WTC11 (cell line): ENCODE measurements at regions of chr15 and their contacts with region 1.

Region 1: DNA sequence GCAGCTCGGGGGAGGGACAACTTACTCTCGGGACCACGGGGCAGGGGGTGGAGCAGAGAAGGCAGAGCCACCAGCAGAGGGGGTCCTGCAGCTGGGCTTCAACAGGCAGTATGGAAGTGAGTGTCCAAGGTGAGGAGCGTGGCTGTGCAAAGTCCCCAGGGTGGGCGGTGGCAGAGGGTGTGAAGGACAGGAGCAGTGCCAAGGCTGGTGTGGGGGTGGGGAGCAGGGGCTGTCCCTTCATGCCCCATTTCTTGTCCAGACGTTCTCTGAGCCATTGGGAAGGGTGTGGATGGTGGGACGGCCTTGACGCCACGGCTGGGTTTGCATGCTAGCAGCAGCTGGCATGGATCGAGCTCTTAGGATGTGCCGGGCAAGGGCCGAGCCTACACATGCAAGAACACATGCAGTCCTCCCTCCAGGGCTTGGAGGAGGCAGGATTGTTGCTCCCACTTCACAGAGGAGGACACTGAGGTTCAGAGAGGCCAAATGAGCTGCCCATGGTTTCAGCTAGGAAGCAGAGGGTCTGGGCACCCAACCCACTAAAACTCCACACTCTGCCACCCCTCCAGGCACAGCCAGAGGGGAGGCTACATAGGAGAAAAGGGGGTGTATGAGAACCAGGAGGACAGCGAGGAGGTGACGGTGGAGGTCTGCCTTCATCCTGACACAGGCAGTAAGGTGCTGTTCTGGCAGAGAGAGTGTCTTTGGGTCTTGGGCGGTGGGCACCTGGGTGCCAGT is 93.6 kb downstream of the TBC1D2B start:
- DNase-seq: no peak
- ATAC-seq: peak; percentile 56
- H3K4me3 Mint-ChIP-seq: no peak overlapping the region
- H3K27ac Mint-ChIP-seq: no peak overlapping the region
- H3K4me1 Mint-ChIP-seq: peaks cover 14% of the 10 kb centered on the region
- H3K27me3 Mint-ChIP-seq: no peaks in the 10 kb centered on the region
- CTCF ChIP-seq: no peak

Region 2: GRCh38 chr15:77907824-77908751 is 75.8 kb before region 1 on chr15:
- CTCF ChIA-PET with region 1: interaction called, 14 read pairs
- POLR2A ChIA-PET with region 1: no interaction called
- DNase-seq: peak; percentile 85
- ATAC-seq: peak; percentile 88
- H3K4me3 Mint-ChIP-seq: no peak overlapping the region
- H3K27ac Mint-ChIP-seq: no peak overlapping the region
- H3K4me1 Mint-ChIP-seq: peaks cover 17% of the 10 kb centered on the region
- H3K27me3 Mint-ChIP-seq: peaks cover 3% of the 10 kb centered on the region; the same call in 1 of the 2 replicates
- CTCF ChIP-seq: 0 out of 2 replicates have a peak, but pooled peaks have one; percentile 36

Region 3: GRCh38 chr15:77966540-77967290 is 17.2 kb before region 1 on chr15:
- CTCF ChIA-PET with region 1: interaction called, 11 read pairs
- POLR2A ChIA-PET with region 1: no interaction called
- DNase-seq: peak; percentile 64
- ATAC-seq: peak; percentile 89
- H3K4me3 Mint-ChIP-seq: no peak overlapping the region
- H3K27ac Mint-ChIP-seq: no peak overlapping the region
- H3K4me1 Mint-ChIP-seq: no peaks in the 10 kb centered on the region
- H3K27me3 Mint-ChIP-seq: peaks cover 6% of the 10 kb centered on the region; the same call in 1 of the 2 replicates
- CTCF ChIP-seq: peak; percentile 60; the same call in 1 of the 2 replicates

Region 4: DNA sequence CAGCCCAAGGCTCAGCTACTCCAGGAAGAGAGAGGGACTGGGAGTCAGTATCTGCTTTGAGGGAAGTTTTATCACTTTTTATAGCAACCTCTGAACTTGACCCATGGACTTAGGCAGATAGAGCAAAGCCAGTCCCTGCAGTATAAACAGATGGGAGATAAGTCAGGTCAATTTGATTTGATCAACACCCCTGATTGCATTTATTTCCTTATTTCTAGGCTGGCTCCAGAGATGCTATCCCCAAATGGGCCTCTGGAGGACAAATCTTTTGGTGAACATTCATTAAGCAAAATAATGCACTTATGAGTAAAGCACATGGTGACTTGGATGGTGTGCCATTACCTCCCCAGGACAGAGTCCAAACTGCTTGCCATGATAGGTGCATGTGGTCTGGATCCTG is 156.4 kb after region 1 on chr15:
- CTCF ChIA-PET with region 1: no interaction called
- POLR2A ChIA-PET with region 1: no interaction called
- DNase-seq: no peak
- ATAC-seq: no peak
- H3K4me3 Mint-ChIP-seq: no peak overlapping the region
- H3K27ac Mint-ChIP-seq: no peak overlapping the region
- H3K4me1 Mint-ChIP-seq: peaks cover 3% of the 10 kb centered on the region
- H3K27me3 Mint-ChIP-seq: peaks cover 7% of the 10 kb centered on the region
- CTCF ChIP-seq: no peak

Region 5: GRCh38 chr15:79523266-79523665 is 1539.4 kb after region 1 on chr15:
- CTCF ChIA-PET with region 1: no interaction called
- POLR2A ChIA-PET with region 1: no interaction called
- DNase-seq: no peak
- ATAC-seq: no peak
- H3K4me3 Mint-ChIP-seq: no peak overlapping the region
- H3K27ac Mint-ChIP-seq: no peak overlapping the region
- H3K4me1 Mint-ChIP-seq: peaks cover 6% of the 10 kb centered on the region
- H3K27me3 Mint-ChIP-seq: no peaks in the 10 kb centered on the region
- CTCF ChIP-seq: no peak